ENCODE measurements at regions of chr17 and their contacts with region 1.

Region 1: GRCh38 chr17:14997290-14997689 is 267.8 kb downstream of the PMP22 start:
- DNase-seq: no peak
- H3K4me3 ChIP-seq: no peak overlapping the region
- H3K27ac ChIP-seq: no peak overlapping the region
- H3K4me1 ChIP-seq: no peaks in the 10 kb centered on the region
- CTCF ChIP-seq: no peak

Region 2: DNA sequence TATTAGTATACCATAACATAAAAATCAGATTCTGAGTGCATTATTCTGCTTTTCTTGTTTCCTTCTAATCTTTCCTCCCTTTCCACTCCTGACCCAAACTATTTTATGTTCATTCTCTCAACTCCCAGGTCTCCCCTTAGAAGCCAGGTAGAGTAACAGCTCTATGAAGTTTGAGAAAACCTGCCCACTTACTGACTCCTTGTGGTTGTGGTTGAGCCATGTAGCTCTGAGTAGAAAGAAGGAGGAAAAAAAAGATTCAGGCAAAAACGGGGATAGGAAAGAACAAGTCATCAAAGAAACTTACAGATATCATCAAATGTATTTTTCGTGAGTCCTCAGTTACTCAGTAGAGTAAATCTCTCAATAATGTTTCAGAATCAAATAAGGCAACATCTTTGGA is 51.1 kb after region 1 on chr17:
- CTCF ChIA-PET with region 1: no interaction called
- POLR2A ChIA-PET with region 1: no interaction called
- intact Hi-C with region 1: loop called (anchors 10 kb)
- DNase-seq: no peak
- H3K4me3 ChIP-seq: no peak overlapping the region
- H3K27ac ChIP-seq: no peak overlapping the region
- H3K4me1 ChIP-seq: no peaks in the 10 kb centered on the region
- CTCF ChIP-seq: no peak

Region 3: GRCh38 chr17:15091825-15092224 is 94.5 kb after region 1 on chr17:
- CTCF ChIA-PET with region 1: no interaction called
- POLR2A ChIA-PET with region 1: no interaction called
- intact Hi-C with region 1: no loop called
- DNase-seq: peak; percentile 8
- H3K4me3 ChIP-seq: no peak overlapping the region
- H3K27ac ChIP-seq: no peak overlapping the region
- H3K4me1 ChIP-seq: no peaks in the 10 kb centered on the region
- CTCF ChIP-seq: peak; percentile 69